ENCODE measurements at regions of chr2 and their contacts with region 1.

Region 1: DNA sequence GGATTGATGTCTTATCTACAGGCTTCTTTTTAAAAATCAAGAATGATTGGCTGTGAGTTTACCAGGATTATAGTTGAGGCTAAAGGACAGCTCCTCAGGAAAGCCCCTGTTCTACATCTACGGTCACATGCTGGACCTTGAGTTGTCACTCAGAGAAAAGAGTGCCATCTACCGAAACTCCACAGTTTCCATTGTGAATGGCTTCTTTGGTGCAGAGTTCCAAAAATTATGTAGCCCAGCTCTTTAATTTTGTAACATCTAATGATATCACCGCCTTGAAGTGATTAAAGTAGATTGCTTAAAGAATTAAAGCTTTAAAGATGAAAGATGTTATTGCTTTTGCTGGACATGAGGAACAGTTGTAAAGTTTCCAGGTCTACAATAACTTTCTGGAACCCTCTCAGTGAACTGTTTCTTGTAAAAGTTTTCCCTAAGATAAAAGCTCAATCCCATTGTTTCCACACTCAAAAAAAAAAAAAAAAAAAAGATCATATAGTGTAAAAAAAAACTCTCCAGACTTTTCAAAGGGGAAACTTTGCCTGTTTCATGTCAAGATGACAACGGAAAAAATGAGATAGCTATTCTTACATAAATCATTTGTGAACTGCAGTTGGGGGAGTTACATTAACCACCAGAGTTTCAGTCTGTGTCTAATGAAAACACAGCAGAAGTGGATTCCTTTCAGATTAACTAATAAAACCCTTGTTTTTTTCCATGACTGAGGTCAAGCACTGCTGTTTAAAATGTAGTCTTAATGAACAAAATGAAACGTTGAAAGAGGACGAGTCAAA is 4.3 kb downstream of the COL3A1 start:
- DNase-seq: no peak
- H3K4me3 ChIP-seq: peak overlapping the region; percentile 64
- H3K27ac ChIP-seq: peak overlapping the region; percentile 82
- H3K4me1 ChIP-seq: no peaks in the 10 kb centered on the region
- H3K27me3 ChIP-seq: no peaks in the 10 kb centered on the region
- CTCF ChIP-seq: peak; percentile 38

Region 2: GRCh38 chr2:188524519-188525113 is 453.9 kb before region 1 on chr2:
- intact Hi-C with region 1: loop called (anchors 10 kb)
- DNase-seq: no peak
- H3K4me3 ChIP-seq: no peak overlapping the region
- H3K27ac ChIP-seq: no peak overlapping the region
- H3K4me1 ChIP-seq: peaks cover 8% of the 10 kb centered on the region
- H3K27me3 ChIP-seq: no peaks in the 10 kb centered on the region
- CTCF ChIP-seq: peak; percentile 86

Region 3: GRCh38 chr2:188788621-188789020 is 189.9 kb before region 1 on chr2:
- intact Hi-C with region 1: loop called (anchors 5 kb)
- DNase-seq: peak; percentile 58
- H3K4me3 ChIP-seq: peak overlapping the region; percentile 14
- H3K27ac ChIP-seq: peak overlapping the region; percentile 71
- H3K4me1 ChIP-seq: peaks cover 8% of the 10 kb centered on the region
- H3K27me3 ChIP-seq: no peaks in the 10 kb centered on the region
- CTCF ChIP-seq: no peak

Region 4: DNA sequence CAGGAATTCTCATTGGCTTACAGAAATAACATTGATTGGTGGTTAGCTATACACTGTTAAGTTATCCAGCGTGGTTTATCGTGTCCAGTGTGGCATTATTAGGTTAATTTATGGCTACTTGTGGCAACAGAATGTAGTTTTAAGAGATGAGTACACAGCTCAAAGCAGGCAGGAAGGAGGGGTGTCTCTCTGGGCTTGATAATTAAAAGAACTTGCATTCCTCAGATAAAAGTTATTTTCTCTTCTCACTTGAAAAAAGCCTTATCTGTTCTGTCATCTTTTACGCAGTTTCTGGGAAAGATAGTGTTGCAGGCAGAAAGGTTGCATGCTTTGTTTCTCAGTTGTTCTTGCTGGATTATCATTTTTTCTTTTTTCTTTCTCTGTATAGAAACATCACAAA is 158.7 kb before region 1 on chr2:
- intact Hi-C with region 1: no loop called
- DNase-seq: no peak
- H3K4me3 ChIP-seq: no peak overlapping the region
- H3K27ac ChIP-seq: no peak overlapping the region
- H3K4me1 ChIP-seq: no peaks in the 10 kb centered on the region
- H3K27me3 ChIP-seq: no peaks in the 10 kb centered on the region
- CTCF ChIP-seq: no peak